HepG2 (cell line): ENCODE measurements at regions of chr17 and their contacts with region 1.

Region 1: DNA sequence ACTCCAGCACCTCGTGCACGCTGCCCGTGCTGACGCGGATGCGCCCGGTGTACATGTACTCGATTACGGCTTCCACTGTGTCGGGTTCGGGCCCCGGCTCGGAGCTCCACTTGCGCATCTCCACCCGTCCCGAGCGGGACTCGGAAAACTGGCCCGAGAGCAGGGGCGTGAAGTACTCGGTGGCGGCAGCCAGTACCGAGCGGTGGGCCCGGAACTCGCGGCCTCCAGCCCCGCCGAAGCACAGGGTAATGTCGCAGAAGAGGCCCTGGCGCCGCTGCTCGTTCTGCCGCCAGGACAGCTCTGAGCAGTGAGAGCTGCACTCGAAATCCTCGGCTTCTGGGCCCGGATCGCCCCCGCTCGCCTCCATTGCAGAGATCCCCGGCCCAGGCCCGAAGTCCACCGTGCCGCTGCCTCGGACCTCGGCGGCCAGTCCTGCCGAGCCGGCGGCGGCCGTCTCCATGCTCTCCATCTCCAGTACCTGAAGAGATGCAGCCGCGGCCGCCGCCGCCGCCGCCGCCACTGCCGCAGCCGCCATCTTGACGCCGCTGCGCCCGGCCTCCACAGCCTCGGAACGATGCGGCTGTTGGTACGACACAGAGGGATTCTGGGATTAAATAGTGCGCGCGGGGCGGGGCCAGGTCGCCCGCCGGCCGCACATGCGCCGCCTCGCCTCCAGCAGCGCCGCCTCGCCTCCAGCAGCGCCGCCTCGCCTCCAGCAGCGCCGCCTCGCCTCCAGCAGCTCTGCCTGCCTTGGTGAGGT is at the start of gene KLHL11:
- DNase-seq: peak; percentile 85
- ATAC-seq: peak; percentile 93
- H3K4me3 ChIP-seq: peak within 1 kb of the TSS; percentile 83 to 98 (median 91)
- H3K27ac ChIP-seq: peak within 1 kb of the TSS; percentile 79
- H3K4me1 ChIP-seq: peaks cover 56% of the 10 kb centered on the region
- H3K27me3 ChIP-seq: no peaks in the 10 kb centered on the region; a peak in 1 of 5 replicates
- CTCF ChIP-seq: no peak; the same call in 1 of the 2 replicates
- EP300 ChIP-seq: peak in 1 of 2 experiments; percentile 26; a peak in 1 of 4 replicates
- POLR2A ChIP-seq: peak; percentile 82 to 93
- RAD21 ChIP-seq: peak; percentile 50; the same call in 1 of the 2 replicates
- total RNA-seq, gene KLHL11: 27.5 and 37.1 TPM in 2 replicates

Region 2: GRCh38 chr17:41786227-41787020 is 78.6 kb before region 1 on chr17 and contains the start of gene JUP:
- CTCF ChIA-PET with region 1: no interaction called
- POLR2A ChIA-PET with region 1: interaction called, 11 read pairs
- in situ Hi-C with region 1: no loop called
- intact Hi-C with region 1: no loop called
- DNase-seq: peak; percentile 99
- ATAC-seq: peak; percentile 97
- H3K4me3 ChIP-seq: peak within 1 kb of the TSS; percentile 60 to 90 (median 71)
- H3K27ac ChIP-seq: peak within 1 kb of the TSS; percentile 62
- H3K4me1 ChIP-seq: peaks cover 34% of the 10 kb centered on the region
- H3K27me3 ChIP-seq: no peaks in the 10 kb centered on the region; a peak in 1 of 5 replicates
- CTCF ChIP-seq: peak; percentile 83
- EP300 ChIP-seq: no peak
- POLR2A ChIP-seq: peak; percentile 89 to 97
- RAD21 ChIP-seq: peak; percentile 93
- total RNA-seq, gene JUP: 20.6 and 20.9 TPM in 2 replicates

Region 3: GRCh38 chr17:41894791-41895331 is 29.8 kb after region 1 on chr17:
- CTCF ChIA-PET with region 1: no interaction called
- POLR2A ChIA-PET with region 1: interaction called, 18 read pairs
- in situ Hi-C with region 1: no loop called
- intact Hi-C with region 1: no loop called
- DNase-seq: no peak
- ATAC-seq: no peak
- H3K4me3 ChIP-seq: no peak overlapping the region
- H3K27ac ChIP-seq: no peak overlapping the region
- H3K4me1 ChIP-seq: peaks cover 25% of the 10 kb centered on the region
- H3K27me3 ChIP-seq: no peaks in the 10 kb centered on the region
- CTCF ChIP-seq: no peak
- EP300 ChIP-seq: no peak
- POLR2A ChIP-seq: no peak
- RAD21 ChIP-seq: no peak

Region 4: GRCh38 chr17:41910701-41911391 is 45.8 kb after region 1 on chr17:
- CTCF ChIA-PET with region 1: no interaction called
- POLR2A ChIA-PET with region 1: interaction called, 15 read pairs
- in situ Hi-C with region 1: no loop called
- intact Hi-C with region 1: loop called (anchors 5 kb)
- DNase-seq: no peak
- ATAC-seq: no peak
- H3K4me3 ChIP-seq: no peak overlapping the region
- H3K27ac ChIP-seq: no peak overlapping the region
- H3K4me1 ChIP-seq: peaks cover 71% of the 10 kb centered on the region
- H3K27me3 ChIP-seq: no peaks in the 10 kb centered on the region
- CTCF ChIP-seq: no peak
- EP300 ChIP-seq: no peak
- POLR2A ChIP-seq: no peak
- RAD21 ChIP-seq: no peak

Region 5: DNA sequence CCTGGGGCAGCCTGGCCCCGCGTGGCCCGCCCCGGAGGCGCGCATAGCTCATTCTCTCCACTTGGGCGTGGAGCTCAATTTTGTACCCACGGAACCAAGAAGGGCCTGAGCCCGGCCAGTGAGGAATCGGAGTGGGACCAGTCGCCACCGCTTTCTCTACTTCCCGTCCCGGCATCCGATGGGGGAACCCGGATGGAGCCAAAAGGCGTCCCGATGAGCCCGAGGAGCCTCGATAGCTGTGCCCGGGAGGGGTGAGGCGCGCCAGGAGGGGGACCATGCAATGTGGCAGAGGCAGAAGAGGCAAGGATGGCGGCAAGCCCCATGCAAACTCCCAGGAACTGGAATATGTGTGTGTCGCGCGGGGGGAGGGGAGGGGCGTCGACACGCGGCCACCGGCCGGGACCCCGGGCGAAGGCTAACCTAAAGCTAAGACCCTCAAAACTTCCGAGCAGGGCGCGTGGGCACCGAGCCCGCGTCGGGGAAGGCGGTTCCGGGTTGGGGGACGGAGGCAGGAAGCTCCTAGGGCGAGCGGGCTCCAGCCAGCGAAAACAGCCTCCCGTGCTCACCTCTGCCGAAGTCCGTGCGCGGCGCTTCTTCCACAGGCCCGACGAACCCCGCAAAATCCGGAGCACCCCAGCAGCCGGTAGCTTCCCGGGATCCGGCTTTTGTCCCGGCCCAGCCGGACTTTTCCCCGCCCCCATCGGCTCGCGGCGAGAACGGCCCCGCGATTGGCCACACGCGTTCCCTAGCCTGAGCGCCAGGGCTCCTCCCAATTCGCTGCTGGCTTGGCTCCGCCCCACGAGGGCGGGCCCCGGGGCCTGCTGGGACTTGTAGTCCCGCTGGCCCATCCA is 53.5 kb after region 1 on chr17 and contains the start of gene ACLY:
- CTCF ChIA-PET with region 1: no interaction called
- POLR2A ChIA-PET with region 1: interaction called, 24 read pairs
- in situ Hi-C with region 1: no loop called
- intact Hi-C with region 1: no loop called
- DNase-seq: peak; percentile 97
- ATAC-seq: peak; percentile 93
- H3K4me3 ChIP-seq: peak within 1 kb of the TSS; percentile 96 to 98 (median 97)
- H3K27ac ChIP-seq: peak within 1 kb of the TSS; percentile 81
- H3K4me1 ChIP-seq: peaks cover 71% of the 10 kb centered on the region
- H3K27me3 ChIP-seq: no peaks in the 10 kb centered on the region; a peak in 1 of 5 replicates
- CTCF ChIP-seq: no peak
- EP300 ChIP-seq: 0 out of 4 replicates have a peak, but pooled peaks of 1 of the 2 experiments have one; percentile 45
- POLR2A ChIP-seq: peak; percentile 88 to 97
- RAD21 ChIP-seq: no peak; the same call in none of the 2 replicates
- total RNA-seq, gene ACLY: 218 and 277 TPM in 2 replicates

Region 6: GRCh38 chr17:41930009-41930832 is 65.2 kb after region 1 on chr17 and contains the start of gene ODAD4:
- CTCF ChIA-PET with region 1: no interaction called
- POLR2A ChIA-PET with region 1: interaction called, 12 read pairs
- in situ Hi-C with region 1: no loop called
- intact Hi-C with region 1: no loop called
- DNase-seq: peak; percentile 95
- ATAC-seq: peak; percentile 99
- H3K4me3 ChIP-seq: peak within 1 kb of the TSS; percentile 51 to 76 (median 70)
- H3K27ac ChIP-seq: peak within 1 kb of the TSS; percentile 62
- H3K4me1 ChIP-seq: peaks cover 42% of the 10 kb centered on the region
- H3K27me3 ChIP-seq: no peaks in the 10 kb centered on the region
- CTCF ChIP-seq: peak; percentile 85
- EP300 ChIP-seq: peak in 1 of 2 experiments; percentile 62; a peak in 1 of 4 replicates
- POLR2A ChIP-seq: peak; percentile 73 to 94
- RAD21 ChIP-seq: peak; percentile 90
- total RNA-seq, gene ODAD4: 0.53 and 0.60 TPM in 2 replicates